ENCODE measurements at regions of chrX and their contacts with region 1.

Region 1: GRCh38 chrX:17242470-17242869 is 132.5 kb upstream of the NHS start:
- DNase-seq: peak in 4 of 5 donors; percentile 7 to 29 (median 20)
- H3K4me3 ChIP-seq: no peak overlapping the region
- H3K4me3 Mint-ChIP-seq: no peak overlapping the region
- H3K27ac ChIP-seq: no peak overlapping the region
- H3K27ac Mint-ChIP-seq: no peak overlapping the region
- H3K4me1 ChIP-seq: no peaks in the 10 kb centered on the region
- H3K4me1 Mint-ChIP-seq: no peaks in the 10 kb centered on the region
- H3K27me3 ChIP-seq: no peaks in the 10 kb centered on the region
- H3K27me3 Mint-ChIP-seq: peaks cover 0 to 4% of the 10 kb centered on the region in 2 donors

Region 2: DNA sequence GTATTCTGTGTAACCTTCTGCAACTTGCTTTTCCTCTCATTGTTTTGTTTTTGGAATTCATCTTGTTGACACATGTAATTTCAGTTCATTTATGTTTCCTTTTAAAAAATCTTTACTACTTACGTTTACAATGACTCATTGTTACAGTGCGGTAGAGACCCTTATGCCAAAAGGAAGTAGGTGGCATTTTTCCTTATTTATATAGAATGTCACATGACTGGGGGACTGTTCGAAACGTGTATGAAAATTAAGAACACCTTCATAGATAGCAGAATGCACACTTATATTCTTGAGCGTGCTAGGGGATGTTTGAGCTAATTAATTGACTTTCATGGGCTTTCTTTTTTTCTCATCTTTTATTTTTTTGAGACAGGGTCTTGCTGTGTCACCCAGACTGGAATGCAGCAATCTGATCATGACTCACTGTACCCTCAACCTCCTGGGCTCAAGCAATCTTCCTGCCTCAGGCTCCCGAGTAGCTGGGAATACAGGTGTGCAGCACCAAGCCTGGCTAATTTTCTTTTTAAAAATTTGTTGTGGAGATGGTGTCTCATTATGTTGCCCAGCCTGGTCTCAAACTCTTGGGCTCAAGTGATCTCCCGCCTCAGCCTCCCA is 288.8 kb before region 1 on chrX:
- CTCF ChIA-PET with region 1: no interaction called
- POLR2A ChIA-PET with region 1: no interaction called
- intact Hi-C with region 1: no loop called
- DNase-seq: no peak
- H3K4me3 ChIP-seq: no peak overlapping the region
- H3K4me3 Mint-ChIP-seq: no peak overlapping the region
- H3K27ac ChIP-seq: no peak overlapping the region
- H3K27ac Mint-ChIP-seq: no peak overlapping the region
- H3K4me1 ChIP-seq: no peaks in the 10 kb centered on the region
- H3K4me1 Mint-ChIP-seq: no peaks in the 10 kb centered on the region
- H3K27me3 ChIP-seq: no peaks in the 10 kb centered on the region
- H3K27me3 Mint-ChIP-seq: peaks cover 2 to 3% of the 10 kb centered on the region in 2 donors

Region 3: GRCh38 chrX:17590892-17591740 is 348.6 kb after region 1 on chrX:
- CTCF ChIA-PET with region 1: no interaction called
- POLR2A ChIA-PET with region 1: no interaction called
- intact Hi-C with region 1: loop called (anchors 2 kb)
- DNase-seq: no peak
- H3K4me3 ChIP-seq: no peak overlapping the region
- H3K4me3 Mint-ChIP-seq: no peak overlapping the region
- H3K27ac ChIP-seq: no peak overlapping the region
- H3K27ac Mint-ChIP-seq: no peak overlapping the region
- H3K4me1 ChIP-seq: no peaks in the 10 kb centered on the region
- H3K4me1 Mint-ChIP-seq: peaks cover 0 to 4% (median 3%) of the 10 kb centered on the region in 4 donors
- H3K27me3 ChIP-seq: no peaks in the 10 kb centered on the region
- H3K27me3 Mint-ChIP-seq: no peaks in the 10 kb centered on the region

Region 4: DNA sequence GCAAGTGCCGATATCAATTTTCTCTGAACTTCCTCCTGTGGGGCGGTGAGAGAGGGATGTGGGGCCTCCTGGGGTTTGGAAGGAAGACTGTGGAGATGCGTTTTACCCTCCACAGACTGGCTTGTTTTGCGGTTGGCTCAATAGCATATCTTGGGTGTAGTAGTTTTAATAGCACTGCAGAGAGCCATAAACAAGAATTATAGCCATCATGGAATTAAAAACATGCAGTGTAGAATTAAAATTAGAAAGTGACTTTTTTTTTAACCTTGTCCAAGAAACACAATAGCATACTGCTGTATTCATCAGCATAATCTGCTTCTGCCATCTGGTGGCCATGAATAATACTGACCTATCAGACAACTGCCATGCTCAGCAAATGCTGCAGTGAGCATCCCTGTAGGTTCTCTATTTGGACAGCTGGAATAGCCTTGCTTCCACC is 447.5 kb after region 1 on chrX:
- CTCF ChIA-PET with region 1: interaction called, 16 read pairs
- POLR2A ChIA-PET with region 1: no interaction called
- intact Hi-C with region 1: no loop called
- DNase-seq: peak; percentile 22 to 52 (median 26)
- H3K4me3 ChIP-seq: no peak overlapping the region
- H3K4me3 Mint-ChIP-seq: no peak overlapping the region
- H3K27ac ChIP-seq: no peak overlapping the region
- H3K27ac Mint-ChIP-seq: no peak overlapping the region
- H3K4me1 ChIP-seq: no peaks in the 10 kb centered on the region
- H3K4me1 Mint-ChIP-seq: no peaks in the 10 kb centered on the region
- H3K27me3 ChIP-seq: no peaks in the 10 kb centered on the region
- H3K27me3 Mint-ChIP-seq: peaks cover 0 to 1% of the 10 kb centered on the region in 2 donors

Measured in CD4-positive, alpha-beta memory T cell (primary cell).